GM10248 (cell line): ENCODE measurements at regions of chr10 and their contacts with region 1.

Region 1: DNA sequence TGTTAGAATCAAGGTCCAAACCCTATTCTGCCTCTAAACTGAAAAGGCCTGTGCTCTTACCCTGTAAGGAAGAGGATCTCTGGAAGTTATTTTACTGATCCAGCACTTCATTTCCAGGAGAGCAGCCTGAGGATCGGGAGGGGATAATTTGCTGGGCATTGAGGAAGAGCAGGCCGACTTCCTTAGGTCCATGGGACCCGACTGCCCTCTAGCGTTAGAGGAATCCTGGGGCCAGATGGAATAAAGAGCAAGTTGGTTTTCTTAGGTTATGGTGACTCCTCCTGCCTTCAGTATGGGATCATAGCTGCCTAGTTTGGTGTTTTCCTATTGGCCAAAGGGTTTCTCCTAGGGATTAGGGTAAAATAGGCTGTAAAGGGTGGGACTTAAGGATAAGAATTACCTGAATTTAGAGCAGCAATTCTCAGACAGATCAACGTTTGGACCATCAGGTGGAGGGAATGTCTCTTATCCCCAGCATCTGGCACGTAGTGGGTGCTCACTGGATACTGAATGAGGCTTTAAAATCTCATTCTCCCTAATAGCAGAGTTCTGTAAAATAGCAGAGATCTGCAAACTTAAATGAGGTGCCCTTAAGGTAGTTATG is 40.0 kb upstream of the SORBS1 start:
- DNase-seq: peak; percentile 67
- CTCF ChIP-seq: peak; percentile 87

Region 2: GRCh38 chr10:95445837-95446486 is 155.3 kb before region 1 on chr10:
- CTCF ChIA-PET with region 1: interaction called, 12 read pairs
- POLR2A ChIA-PET with region 1: no interaction called
- DNase-seq: peak; percentile 73
- CTCF ChIP-seq: peak; percentile 86

Region 3: DNA sequence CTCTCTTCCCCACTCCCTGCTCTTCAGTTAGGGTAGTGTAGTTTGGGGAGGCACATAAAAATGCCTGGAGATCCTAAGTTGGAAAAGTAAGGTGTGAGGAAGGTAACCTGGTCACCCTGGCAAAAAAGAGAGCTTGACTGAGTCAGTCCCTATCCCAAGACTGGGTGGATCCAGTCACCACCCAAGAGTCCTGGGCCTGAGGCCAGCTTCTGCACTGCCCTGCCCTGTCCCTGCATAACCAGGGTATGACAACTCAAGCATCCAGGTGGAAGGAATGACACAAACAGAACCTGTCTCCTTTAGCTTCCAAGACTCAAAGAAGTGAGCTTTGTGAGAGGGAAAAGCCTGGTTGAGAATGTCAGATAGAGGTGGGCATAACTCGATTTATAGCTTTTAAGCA is 13.2 kb before region 1 on chr10:
- CTCF ChIA-PET with region 1: interaction called, 51 read pairs
- POLR2A ChIA-PET with region 1: no interaction called
- DNase-seq: no peak
- CTCF ChIP-seq: no peak

Region 4: DNA sequence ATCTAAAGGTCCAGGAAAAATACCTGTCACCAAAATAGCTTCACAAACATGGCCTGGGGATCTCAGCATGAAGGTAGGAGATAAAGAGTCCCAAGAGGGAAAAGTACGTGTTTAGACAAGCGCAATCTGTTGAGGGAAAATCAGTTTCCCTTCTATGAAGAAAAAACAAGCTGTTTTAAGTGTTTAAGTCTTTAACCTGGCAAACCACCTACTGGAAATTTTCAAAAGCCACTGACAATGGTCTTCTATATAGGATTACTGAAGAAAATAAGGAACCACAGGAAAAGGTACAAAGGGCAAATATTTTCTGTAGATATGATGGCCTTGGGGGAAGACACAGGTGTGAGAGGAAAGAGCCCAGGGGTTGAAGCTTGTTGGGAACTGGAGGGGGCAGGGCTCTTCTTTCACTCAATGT is 34.1 kb after region 1 on chr10:
- CTCF ChIA-PET with region 1: interaction called, 12 read pairs
- POLR2A ChIA-PET with region 1: no interaction called
- DNase-seq: no peak
- CTCF ChIP-seq: no peak